ENCODE measurements at regions of chr11 and their contacts with region 1.

Region 1: GRCh38 chr11:109946322-109946846 is 146.8 kb upstream of the ZC3H12C start:
- DNase-seq: peak; percentile 81 to 90 (median 84)
- ATAC-seq: peak; percentile 90 to 99 (median 99)
- H3K4me3 ChIP-seq: peak overlapping the region in 10 of 12 donors; percentile 10 to 51 (median 34)
- H3K27ac ChIP-seq: peak overlapping the region in 11 of 12 donors; percentile 43 to 77 (median 60)
- H3K4me1 ChIP-seq: peaks cover 0 to 8% (median 4%) of the 10 kb centered on the region in 12 donors
- H3K27me3 ChIP-seq: no peaks in the 10 kb centered on the region
- CTCF ChIP-seq: peak; percentile 83 to 98 (median 90)
- POLR2A ChIP-seq: peak in 1 of 2 donors; percentile 49

Region 2: DNA sequence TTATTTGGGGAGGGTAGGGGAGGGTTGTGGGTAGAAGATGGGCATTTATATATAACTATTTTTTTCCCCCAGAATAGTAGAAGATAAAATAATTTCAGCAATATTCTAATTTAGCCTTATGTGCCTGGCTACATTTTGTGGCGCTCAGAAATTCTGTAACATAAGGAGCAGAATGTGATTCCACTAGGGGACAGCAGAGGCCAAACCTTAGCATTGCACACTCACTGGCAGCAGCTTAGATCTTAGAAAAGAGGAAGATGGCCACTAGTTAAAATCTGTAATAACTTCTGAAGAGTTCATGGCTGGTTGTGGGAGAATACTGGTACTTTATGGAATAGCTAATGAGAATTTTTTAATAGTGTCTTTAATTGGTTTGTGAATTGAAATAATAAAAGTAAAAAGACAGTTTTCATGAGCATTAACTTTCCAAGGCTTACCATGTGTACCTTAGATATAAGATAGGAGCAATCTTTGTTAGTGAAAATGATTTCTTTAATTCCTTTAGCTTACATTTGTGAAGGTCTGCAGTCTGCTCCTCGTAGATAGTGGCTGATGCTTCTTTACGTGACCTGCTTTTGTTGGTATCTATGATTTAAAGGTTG is 1248.4 kb before region 1 on chr11:
- intact Hi-C with region 1: loop called in 1 of 10 experiments (anchors 10 kb)
- DNase-seq: peak in 4 of 5 donors; percentile 39 to 53 (median 46)
- ATAC-seq: peak in 3 of 4 donors; percentile 82 to 88 (median 88)
- H3K4me3 ChIP-seq: no peak overlapping the region
- H3K27ac ChIP-seq: no peak overlapping the region
- H3K4me1 ChIP-seq: peaks cover 0 to 3% (median 0%) of the 10 kb centered on the region in 12 donors
- H3K27me3 ChIP-seq: no peaks in the 10 kb centered on the region
- CTCF ChIP-seq: peak; percentile 75 to 93 (median 86)
- POLR2A ChIP-seq: no peak

Region 3: GRCh38 chr11:110173811-110174644 is 227.6 kb after region 1 on chr11:
- intact Hi-C with region 1: loop called in 5 of 10 experiments (anchors 5 to 10 kb)
- DNase-seq: peak; percentile 44 to 72 (median 62)
- ATAC-seq: peak in 3 of 4 donors; percentile 75 to 82 (median 77)
- H3K4me3 ChIP-seq: peak overlapping the region in 8 of 12 donors; percentile 14 to 51 (median 28)
- H3K27ac ChIP-seq: no peak overlapping the region
- H3K4me1 ChIP-seq: peaks cover 0 to 14% (median 3%) of the 10 kb centered on the region in 12 donors
- H3K27me3 ChIP-seq: no peaks in the 10 kb centered on the region
- CTCF ChIP-seq: peak; percentile 65 to 83 (median 75)
- POLR2A ChIP-seq: no peak

Region 4: DNA sequence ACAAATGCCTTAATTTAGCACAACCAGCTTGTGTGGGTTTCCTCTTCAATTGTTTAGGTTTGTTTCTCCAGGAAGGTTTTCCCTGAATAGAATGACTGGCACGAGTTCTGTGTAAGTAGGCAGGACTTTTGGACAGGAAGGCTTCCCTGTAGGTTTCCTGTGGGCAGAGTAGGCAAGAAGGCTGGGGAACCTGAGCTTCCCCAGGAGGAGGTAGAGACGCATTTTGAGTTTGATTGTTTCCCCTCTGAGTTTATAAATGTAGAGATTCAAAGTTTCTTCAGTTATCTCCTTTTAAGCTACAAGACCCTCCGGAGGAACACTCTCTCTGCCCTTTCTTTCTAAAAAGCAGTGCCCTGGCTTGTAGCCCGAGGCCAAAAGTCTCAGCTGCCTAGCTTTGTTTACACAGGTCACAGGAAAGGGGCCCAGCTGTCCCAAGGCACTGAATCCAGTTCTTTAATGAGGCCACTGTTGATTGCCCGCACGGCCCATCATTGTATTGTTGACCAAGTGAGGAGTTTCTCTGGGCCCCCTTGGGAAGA is 416.7 kb after region 1 on chr11:
- intact Hi-C with region 1: loop called in 3 of 10 experiments (anchors 5 kb)
- DNase-seq: peak in 3 of 5 donors; percentile 20 to 36 (median 30)
- ATAC-seq: peak in 3 of 4 donors; percentile 52 to 72 (median 68)
- H3K4me3 ChIP-seq: no peak overlapping the region
- H3K27ac ChIP-seq: peak overlapping the region in 11 of 12 donors; percentile 3 to 70 (median 41)
- H3K4me1 ChIP-seq: peaks cover 6 to 34% (median 14%) of the 10 kb centered on the region in 12 donors
- H3K27me3 ChIP-seq: no peaks in the 10 kb centered on the region
- CTCF ChIP-seq: no peak
- POLR2A ChIP-seq: no peak

Region 5: DNA sequence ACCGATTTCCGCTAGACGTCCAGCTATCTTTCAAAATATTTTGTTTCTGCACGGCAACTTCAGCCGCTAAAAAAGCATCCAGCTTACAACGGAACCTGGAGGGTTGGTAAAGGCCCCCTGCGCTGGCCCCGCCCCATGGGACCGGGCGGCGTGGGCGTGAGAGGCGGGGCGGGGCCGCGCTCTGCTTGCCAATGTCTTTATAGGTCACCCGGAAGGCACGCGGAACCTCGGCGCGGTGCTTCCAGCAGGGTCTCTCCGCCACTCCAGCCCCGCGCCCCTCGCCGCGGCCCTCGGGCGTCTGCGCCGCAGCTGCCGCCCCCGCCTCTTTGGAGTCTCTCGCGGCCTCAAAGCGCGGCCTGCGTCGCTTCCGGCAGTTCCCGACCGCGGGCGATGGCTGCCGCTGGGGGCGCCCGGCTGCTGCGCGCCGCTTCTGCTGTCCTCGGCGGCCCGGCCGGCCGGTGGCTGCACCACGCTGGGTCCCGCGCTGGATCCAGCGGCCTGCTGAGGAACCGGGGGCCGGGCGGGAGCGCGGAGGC is 483.4 kb after region 1 on chr11 and contains the start of gene FDX1:
- intact Hi-C with region 1: loop called in 4 of 10 experiments (anchors 5 to 10 kb)
- DNase-seq: peak; percentile 79 to 91 (median 90)
- ATAC-seq: peak; percentile 86 to 97 (median 95)
- H3K4me3 ChIP-seq: peak within 1 kb of the TSS; percentile 73 to 94 (median 84)
- H3K27ac ChIP-seq: peak within 1 kb of the TSS; percentile 74 to 97 (median 91)
- H3K4me1 ChIP-seq: peaks cover 0 to 39% (median 31%) of the 10 kb centered on the region in 12 donors
- H3K27me3 ChIP-seq: no peaks in the 10 kb centered on the region
- CTCF ChIP-seq: peak; percentile 32 to 89 (median 70)
- POLR2A ChIP-seq: peak in 1 of 2 donors; percentile 76
- total RNA-seq, gene FDX1: 15.2 to 28.5 (median 22.5) TPM